WTC11 (cell line): ENCODE measurements at regions of chr1 and their contacts with region 1.

Region 1: GRCh38 chr1:234309598-234310459 is 63.4 kb upstream of the COA6 start:
- DNase-seq: peak; percentile 80
- ATAC-seq: peak; percentile 91
- H3K4me3 Mint-ChIP-seq: no peak overlapping the region
- H3K27ac Mint-ChIP-seq: no peak overlapping the region
- H3K4me1 Mint-ChIP-seq: peaks cover 20% of the 10 kb centered on the region
- H3K27me3 Mint-ChIP-seq: peaks cover 6% of the 10 kb centered on the region; the same call in 1 of the 2 replicates
- CTCF ChIP-seq: peak; percentile 84

Region 2: DNA sequence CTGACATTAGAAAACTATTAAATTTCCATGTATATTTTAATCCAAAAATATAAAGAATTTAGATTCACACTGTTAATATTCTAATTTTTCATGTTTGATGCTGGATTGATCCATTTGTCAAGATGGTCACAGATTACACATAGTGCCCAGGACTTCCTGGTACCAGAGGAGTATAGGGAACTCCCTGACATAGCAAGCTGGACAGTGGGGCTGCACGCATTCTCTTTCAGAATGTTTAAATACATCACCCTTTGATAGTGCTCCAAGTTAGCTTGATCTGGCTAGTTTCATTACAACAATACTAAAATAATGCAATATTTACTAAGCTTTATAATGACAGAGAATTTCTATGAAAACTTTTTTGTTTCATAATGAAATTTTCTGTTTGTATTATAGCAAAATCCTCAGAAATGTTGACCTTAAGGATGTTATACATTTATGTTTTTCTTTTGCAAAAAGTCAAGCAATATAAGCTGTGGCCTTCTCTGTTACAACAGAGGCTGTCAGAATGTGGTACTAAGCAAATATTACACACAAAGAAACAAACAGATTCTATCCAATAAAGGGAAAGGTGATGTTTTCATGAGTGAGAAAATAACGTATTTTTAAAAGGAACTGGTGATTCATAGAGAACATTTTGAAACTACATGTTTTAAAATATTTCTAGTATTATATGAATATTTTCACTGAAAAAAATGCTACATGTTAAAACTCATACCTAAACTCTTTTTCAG is 320.7 kb before region 1 on chr1:
- CTCF ChIA-PET with region 1: no interaction called
- POLR2A ChIA-PET with region 1: no interaction called
- DNase-seq: no peak
- ATAC-seq: no peak
- H3K4me3 Mint-ChIP-seq: no peak overlapping the region
- H3K27ac Mint-ChIP-seq: no peak overlapping the region
- H3K4me1 Mint-ChIP-seq: peaks cover 6% of the 10 kb centered on the region
- H3K27me3 Mint-ChIP-seq: no peaks in the 10 kb centered on the region; the same call in 1 of the 2 replicates
- CTCF ChIP-seq: no peak

Region 3: DNA sequence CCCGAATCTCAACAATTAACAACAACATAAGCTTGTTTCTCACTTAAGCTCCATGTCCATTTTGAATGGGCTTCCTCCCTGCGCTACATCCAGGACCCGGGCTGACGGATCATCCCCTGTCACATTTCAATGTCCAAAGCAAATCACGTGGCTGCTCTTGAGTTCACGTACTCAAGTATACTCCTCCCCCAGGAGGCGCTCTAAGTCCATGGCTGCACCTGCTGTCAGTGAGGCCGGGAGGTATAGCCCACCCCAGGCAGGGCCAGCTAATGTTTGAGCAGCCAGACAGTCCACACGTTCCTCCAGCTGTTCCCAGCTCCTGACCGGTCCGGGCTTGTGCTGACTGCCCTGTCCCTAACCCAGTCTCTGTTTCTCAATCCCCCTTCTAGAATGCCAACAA is 184.5 kb before region 1 on chr1:
- CTCF ChIA-PET with region 1: interaction called, 71 read pairs
- POLR2A ChIA-PET with region 1: no interaction called
- DNase-seq: peak; percentile 90
- ATAC-seq: peak; percentile 100
- H3K4me3 Mint-ChIP-seq: peak overlapping the region; percentile 10; the same call in 1 of the 2 replicates
- H3K27ac Mint-ChIP-seq: no peak overlapping the region
- H3K4me1 Mint-ChIP-seq: peaks cover 7% of the 10 kb centered on the region
- H3K27me3 Mint-ChIP-seq: peaks cover 6% of the 10 kb centered on the region
- CTCF ChIP-seq: peak; percentile 58

Region 4: GRCh38 chr1:234212764-234213657 is 96.8 kb before region 1 on chr1:
- CTCF ChIA-PET with region 1: interaction called, 105 read pairs
- POLR2A ChIA-PET with region 1: interaction called, 7 read pairs
- DNase-seq: peak; percentile 43
- ATAC-seq: peak; percentile 58
- H3K4me3 Mint-ChIP-seq: peak overlapping the region; percentile 85
- H3K27ac Mint-ChIP-seq: no peak overlapping the region
- H3K4me1 Mint-ChIP-seq: peaks cover 11% of the 10 kb centered on the region
- H3K27me3 Mint-ChIP-seq: peaks cover 15% of the 10 kb centered on the region
- CTCF ChIP-seq: peak; percentile 35; the same call in 1 of the 2 replicates

Region 5: DNA sequence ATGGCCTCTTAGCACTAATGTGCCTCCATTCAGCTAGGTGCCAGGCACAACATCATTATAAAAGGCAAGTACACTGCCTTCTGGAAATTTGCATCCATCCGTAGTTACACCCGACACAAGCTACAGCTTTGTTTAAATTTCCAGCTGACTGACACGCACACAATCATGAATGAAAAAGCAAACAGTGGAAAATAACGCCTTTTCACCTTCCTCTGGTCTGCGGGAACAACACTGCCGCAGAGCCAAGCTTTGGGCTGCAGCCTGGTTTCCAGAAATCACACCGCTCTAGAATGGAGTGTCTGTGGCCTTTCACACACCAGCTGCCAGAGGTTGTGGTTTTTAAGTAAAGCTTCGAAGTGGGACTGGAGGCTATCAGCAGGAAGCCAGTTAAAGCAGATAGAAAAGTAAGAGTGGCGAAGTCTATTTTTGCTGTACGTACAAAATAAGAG is 79.4 kb before region 1 on chr1:
- CTCF ChIA-PET with region 1: interaction called, 28 read pairs
- POLR2A ChIA-PET with region 1: interaction called, 3 read pairs
- DNase-seq: no peak
- ATAC-seq: no peak
- H3K4me3 Mint-ChIP-seq: no peak overlapping the region
- H3K27ac Mint-ChIP-seq: no peak overlapping the region
- H3K4me1 Mint-ChIP-seq: peaks cover 43% of the 10 kb centered on the region
- H3K27me3 Mint-ChIP-seq: peaks cover 19% of the 10 kb centered on the region
- CTCF ChIP-seq: no peak

Region 6: DNA sequence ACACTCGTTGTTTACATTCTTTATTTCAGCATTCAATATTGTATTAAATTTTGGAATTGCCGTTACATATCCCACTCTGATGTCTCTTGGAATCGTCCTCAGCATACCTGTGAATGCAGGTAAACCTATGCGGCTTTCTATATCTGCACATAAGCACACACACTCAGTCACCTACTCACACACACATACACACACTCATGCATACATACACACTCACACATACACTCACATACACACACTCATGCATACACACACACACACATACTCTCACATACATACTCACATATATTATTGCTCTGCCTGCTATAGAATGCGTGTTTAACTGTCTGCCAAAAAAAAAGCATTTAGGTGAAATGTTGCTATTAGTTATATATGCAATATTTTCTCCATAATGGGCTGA is 10.2 kb after region 1 on chr1:
- CTCF ChIA-PET with region 1: interaction called, 41 read pairs
- POLR2A ChIA-PET with region 1: no interaction called
- DNase-seq: no peak
- ATAC-seq: no peak
- H3K4me3 Mint-ChIP-seq: no peak overlapping the region
- H3K27ac Mint-ChIP-seq: no peak overlapping the region
- H3K4me1 Mint-ChIP-seq: peaks cover 23% of the 10 kb centered on the region
- H3K27me3 Mint-ChIP-seq: peaks cover 26% of the 10 kb centered on the region
- CTCF ChIP-seq: no peak

Region 7: DNA sequence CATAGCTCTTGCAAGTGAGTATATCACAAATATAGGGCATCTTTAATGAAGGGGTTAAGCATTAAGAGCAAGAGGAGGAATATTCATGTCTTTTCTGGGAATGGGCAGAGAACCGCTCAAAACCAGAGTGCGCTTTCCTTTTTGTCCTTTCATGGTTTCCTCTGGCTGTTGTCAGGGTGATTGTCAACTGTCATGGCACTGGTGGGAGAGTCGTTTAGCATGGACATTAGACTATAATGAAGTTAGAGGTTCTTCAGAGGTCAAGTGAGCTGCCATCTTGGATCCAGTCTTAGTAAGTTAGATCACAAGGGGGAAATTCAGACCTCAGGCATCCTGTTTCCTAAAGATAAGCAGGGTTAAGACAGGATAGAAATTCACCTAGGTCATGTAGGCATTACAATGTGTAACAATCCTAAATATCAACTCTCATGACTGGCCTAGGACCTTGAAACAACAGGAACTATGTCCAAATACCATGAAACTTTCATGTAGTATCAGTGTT is 51.3 kb after region 1 on chr1:
- CTCF ChIA-PET with region 1: no interaction called
- POLR2A ChIA-PET with region 1: no interaction called
- DNase-seq: no peak
- ATAC-seq: no peak
- H3K4me3 Mint-ChIP-seq: no peak overlapping the region
- H3K27ac Mint-ChIP-seq: no peak overlapping the region
- H3K4me1 Mint-ChIP-seq: peaks cover 6% of the 10 kb centered on the region
- H3K27me3 Mint-ChIP-seq: peaks cover 3% of the 10 kb centered on the region; the same call in 1 of the 2 replicates
- CTCF ChIP-seq: no peak

Region 8: GRCh38 chr1:234373064-234373958 is 63.5 kb after region 1 on chr1 and contains the start of gene COA6:
- CTCF ChIA-PET with region 1: interaction called, 12 read pairs
- POLR2A ChIA-PET with region 1: no interaction called
- DNase-seq: peak; percentile 81
- ATAC-seq: peak; percentile 92
- H3K4me3 Mint-ChIP-seq: peak within 1 kb of the TSS; percentile 98
- H3K27ac Mint-ChIP-seq: peak within 1 kb of the TSS; percentile 97
- H3K4me1 Mint-ChIP-seq: peaks cover 12% of the 10 kb centered on the region
- H3K27me3 Mint-ChIP-seq: no peaks in the 10 kb centered on the region
- CTCF ChIP-seq: no peak
- total RNA-seq, gene COA6: 41.6 to 47.9 TPM (median 44.3 TPM) in 3 replicates

Region 9: DNA sequence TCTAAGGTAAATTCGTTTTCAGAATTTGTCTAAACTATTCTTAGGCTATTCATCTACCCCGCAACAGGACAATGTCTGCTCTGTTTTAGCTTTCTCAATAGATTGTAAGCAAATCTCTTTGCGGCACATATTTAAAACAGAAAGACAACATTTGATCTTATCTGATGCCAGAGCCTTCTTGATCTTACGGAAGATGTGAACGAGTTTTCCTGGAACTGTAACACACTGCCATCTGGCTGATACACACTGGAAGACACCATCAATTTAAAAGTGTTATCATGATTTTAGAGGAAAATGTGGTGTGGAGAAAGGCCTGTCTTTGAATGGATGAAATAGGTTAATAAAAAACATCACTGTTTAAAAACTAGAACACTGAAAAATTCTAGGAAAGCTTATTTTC is 99.5 kb after region 1 on chr1:
- CTCF ChIA-PET with region 1: no interaction called
- POLR2A ChIA-PET with region 1: no interaction called
- DNase-seq: no peak
- ATAC-seq: no peak
- H3K4me3 Mint-ChIP-seq: no peak overlapping the region
- H3K27ac Mint-ChIP-seq: no peak overlapping the region
- H3K4me1 Mint-ChIP-seq: peaks cover 6% of the 10 kb centered on the region
- H3K27me3 Mint-ChIP-seq: no peaks in the 10 kb centered on the region
- CTCF ChIP-seq: no peak